WTC11 (cell line): ENCODE measurements at regions of chr15 and their contacts with region 1.

Region 1: GRCh38 chr15:79339564-79340314 is 28.8 kb downstream of the TMED3 start:
- DNase-seq: no peak
- ATAC-seq: peak; percentile 53; the same call in 1 of the 2 replicates
- H3K4me3 Mint-ChIP-seq: no peak overlapping the region
- H3K27ac Mint-ChIP-seq: no peak overlapping the region
- H3K4me1 Mint-ChIP-seq: 0 out of 2 replicates have a peak, but pooled peaks cover 3% of the 10 kb centered on the region
- H3K27me3 Mint-ChIP-seq: no peaks in the 10 kb centered on the region
- CTCF ChIP-seq: peak; percentile 68

Region 2: GRCh38 chr15:79283252-79284048 is 56.3 kb before region 1 on chr15:
- CTCF ChIA-PET with region 1: no interaction called
- POLR2A ChIA-PET with region 1: no interaction called
- DNase-seq: peak; percentile 81
- ATAC-seq: peak; percentile 90
- H3K4me3 Mint-ChIP-seq: peak overlapping the region; percentile 71
- H3K27ac Mint-ChIP-seq: no peak overlapping the region
- H3K4me1 Mint-ChIP-seq: peaks cover 9% of the 10 kb centered on the region
- H3K27me3 Mint-ChIP-seq: peaks cover 82% of the 10 kb centered on the region
- CTCF ChIP-seq: no peak

Region 3: DNA sequence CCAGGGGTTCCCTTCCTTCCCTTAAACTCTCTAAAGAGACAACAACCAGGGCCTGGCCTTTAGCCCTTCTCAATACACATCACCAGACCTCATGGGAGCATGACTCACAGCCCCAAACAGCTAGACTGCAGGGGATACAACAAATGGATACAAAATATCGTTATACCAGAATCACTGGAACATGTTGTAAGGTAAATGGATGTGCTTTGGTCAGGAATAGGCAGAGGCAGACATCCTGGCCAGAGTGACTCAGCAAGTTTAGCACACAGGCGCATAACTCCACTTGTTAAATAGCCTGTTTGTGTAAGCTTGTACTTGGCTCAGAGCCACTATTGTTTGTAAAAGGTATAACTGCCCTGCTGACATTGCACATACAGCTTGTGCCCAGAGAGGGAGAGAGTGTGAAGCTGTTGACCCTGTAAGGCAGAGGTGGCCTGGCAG is 10.5 kb before region 1 on chr15:
- CTCF ChIA-PET with region 1: no interaction called
- POLR2A ChIA-PET with region 1: no interaction called
- DNase-seq: no peak
- ATAC-seq: peak; percentile 46
- H3K4me3 Mint-ChIP-seq: no peak overlapping the region
- H3K27ac Mint-ChIP-seq: 0 out of 2 replicates have a peak overlapping the region, but pooled peaks have one; percentile 60
- H3K4me1 Mint-ChIP-seq: peaks cover 23% of the 10 kb centered on the region
- H3K27me3 Mint-ChIP-seq: no peaks in the 10 kb centered on the region
- CTCF ChIP-seq: no peak

Region 4: GRCh38 chr15:79352206-79352605 is 12.5 kb after region 1 on chr15:
- CTCF ChIA-PET with region 1: interaction called, 14 read pairs
- POLR2A ChIA-PET with region 1: no interaction called
- DNase-seq: no peak
- ATAC-seq: no peak
- H3K4me3 Mint-ChIP-seq: no peak overlapping the region
- H3K27ac Mint-ChIP-seq: no peak overlapping the region
- H3K4me1 Mint-ChIP-seq: no peaks in the 10 kb centered on the region
- H3K27me3 Mint-ChIP-seq: no peaks in the 10 kb centered on the region
- CTCF ChIP-seq: no peak

Region 5: GRCh38 chr15:79431636-79432344 is 92.1 kb after region 1 on chr15 and contains the start of gene MINAR1:
- CTCF ChIA-PET with region 1: interaction called, 15 read pairs
- POLR2A ChIA-PET with region 1: no interaction called
- DNase-seq: peak; percentile 47
- ATAC-seq: peak; percentile 56
- H3K4me3 Mint-ChIP-seq: peak within 1 kb of the TSS; percentile 82
- H3K27ac Mint-ChIP-seq: no peak within 1 kb of the TSS
- H3K4me1 Mint-ChIP-seq: peaks cover 45% of the 10 kb centered on the region
- H3K27me3 Mint-ChIP-seq: peaks cover 77% of the 10 kb centered on the region
- CTCF ChIP-seq: no peak
- total RNA-seq, gene MINAR1: 0.78 to 1.4 TPM (median 0.80 TPM) in 3 replicates

Region 6: DNA sequence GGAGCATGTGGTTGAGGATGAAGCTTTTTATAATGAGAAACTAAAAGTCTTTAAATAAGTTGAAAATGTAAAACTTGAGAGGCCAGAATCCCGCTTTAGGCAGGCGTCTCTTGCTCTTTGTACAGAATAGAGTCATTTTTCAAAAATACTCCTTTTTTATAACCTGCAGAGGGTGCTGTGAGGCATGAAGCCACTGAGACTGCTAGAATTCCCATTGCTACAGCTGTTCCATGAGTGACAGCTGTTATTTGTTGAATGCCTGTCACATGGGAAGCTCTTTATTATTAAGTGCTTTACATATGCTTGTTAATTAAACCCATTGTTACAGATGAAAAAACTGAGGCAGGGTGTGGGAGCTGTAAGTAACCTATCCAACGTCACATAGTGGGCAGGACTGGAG is 110.9 kb after region 1 on chr15:
- CTCF ChIA-PET with region 1: interaction called, 11 read pairs
- POLR2A ChIA-PET with region 1: no interaction called
- DNase-seq: no peak
- ATAC-seq: 0 out of 2 replicates have a peak, but pooled peaks have one; percentile 22
- H3K4me3 Mint-ChIP-seq: no peak overlapping the region
- H3K27ac Mint-ChIP-seq: no peak overlapping the region
- H3K4me1 Mint-ChIP-seq: no peaks in the 10 kb centered on the region
- H3K27me3 Mint-ChIP-seq: no peaks in the 10 kb centered on the region
- CTCF ChIP-seq: no peak

Region 7: GRCh38 chr15:79853458-79854328 is 514.0 kb after region 1 on chr15:
- CTCF ChIA-PET with region 1: interaction called, 25 read pairs
- POLR2A ChIA-PET with region 1: no interaction called
- DNase-seq: peak; percentile 72
- ATAC-seq: peak; percentile 98
- H3K4me3 Mint-ChIP-seq: no peak overlapping the region
- H3K27ac Mint-ChIP-seq: peak overlapping the region; percentile 63
- H3K4me1 Mint-ChIP-seq: peaks cover 5% of the 10 kb centered on the region
- H3K27me3 Mint-ChIP-seq: no peaks in the 10 kb centered on the region
- CTCF ChIP-seq: peak; percentile 83